Activated naive CD4-positive, alpha-beta T cell treated with anti-CD3 and anti-CD28 coated beads, Interleukin-2, amount 10 ng/mL, durations not matched to agents 7 days and 5 days (primary cell): ENCODE measurements at regions of chr17 and their contacts with region 1.

Region 1: GRCh38 chr17:77404812-77405581 is 264.2 kb downstream of the SEC14L1 start:
- DNase-seq: peak; percentile 91
- H3K4me3 Mint-ChIP-seq: peak overlapping the region; percentile 85
- H3K27ac Mint-ChIP-seq: peak overlapping the region; percentile 96
- H3K4me1 Mint-ChIP-seq: peaks cover 99% of the 10 kb centered on the region
- H3K27me3 Mint-ChIP-seq: no peaks in the 10 kb centered on the region

Region 2: DNA sequence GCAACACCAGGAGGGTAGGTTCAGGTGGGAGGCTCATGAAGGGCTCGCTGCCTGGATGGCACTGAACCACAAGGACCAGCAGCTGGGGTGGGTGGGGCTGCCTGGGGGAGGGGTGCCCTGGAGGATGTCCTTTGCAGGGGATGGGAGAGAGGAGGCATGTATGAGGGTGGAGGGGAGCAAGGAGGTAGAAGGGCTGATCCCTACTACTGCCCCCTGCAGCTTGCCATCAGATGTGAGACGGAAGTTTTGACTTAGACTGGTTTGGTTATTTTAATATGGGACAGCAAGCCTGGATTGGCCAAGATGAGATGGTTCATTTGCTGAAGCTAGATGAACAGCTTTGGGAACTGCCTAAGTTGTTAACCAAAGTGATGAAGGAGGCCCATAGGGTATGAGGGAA is 148.3 kb before region 1 on chr17:
- CTCF ChIA-PET with region 1: no interaction called
- DNase-seq: no peak
- H3K4me3 Mint-ChIP-seq: no peak overlapping the region
- H3K27ac Mint-ChIP-seq: no peak overlapping the region
- H3K4me1 Mint-ChIP-seq: no peaks in the 10 kb centered on the region
- H3K27me3 Mint-ChIP-seq: peaks cover 54% of the 10 kb centered on the region

Region 3: GRCh38 chr17:77382966-77383612 is 21.9 kb before region 1 on chr17:
- CTCF ChIA-PET with region 1: interaction called, 24 read pairs
- DNase-seq: no peak
- H3K4me3 Mint-ChIP-seq: peak overlapping the region; percentile 70
- H3K27ac Mint-ChIP-seq: peak overlapping the region; percentile 86
- H3K4me1 Mint-ChIP-seq: peaks cover 93% of the 10 kb centered on the region
- H3K27me3 Mint-ChIP-seq: no peaks in the 10 kb centered on the region

Region 4: GRCh38 chr17:77420804-77421629 is 16.0 kb after region 1 on chr17:
- CTCF ChIA-PET with region 1: interaction called, 20 read pairs
- DNase-seq: peak; percentile 65
- H3K4me3 Mint-ChIP-seq: peak overlapping the region; percentile 46
- H3K27ac Mint-ChIP-seq: peak overlapping the region; percentile 89
- H3K4me1 Mint-ChIP-seq: peaks cover 79% of the 10 kb centered on the region
- H3K27me3 Mint-ChIP-seq: no peaks in the 10 kb centered on the region

Region 5: GRCh38 chr17:77444984-77445759 is 40.2 kb after region 1 on chr17:
- CTCF ChIA-PET with region 1: interaction called, 17 read pairs
- DNase-seq: peak; percentile 92
- H3K4me3 Mint-ChIP-seq: peak overlapping the region; percentile 85
- H3K27ac Mint-ChIP-seq: peak overlapping the region; percentile 98
- H3K4me1 Mint-ChIP-seq: peaks cover 100% of the 10 kb centered on the region
- H3K27me3 Mint-ChIP-seq: no peaks in the 10 kb centered on the region

Region 6: DNA sequence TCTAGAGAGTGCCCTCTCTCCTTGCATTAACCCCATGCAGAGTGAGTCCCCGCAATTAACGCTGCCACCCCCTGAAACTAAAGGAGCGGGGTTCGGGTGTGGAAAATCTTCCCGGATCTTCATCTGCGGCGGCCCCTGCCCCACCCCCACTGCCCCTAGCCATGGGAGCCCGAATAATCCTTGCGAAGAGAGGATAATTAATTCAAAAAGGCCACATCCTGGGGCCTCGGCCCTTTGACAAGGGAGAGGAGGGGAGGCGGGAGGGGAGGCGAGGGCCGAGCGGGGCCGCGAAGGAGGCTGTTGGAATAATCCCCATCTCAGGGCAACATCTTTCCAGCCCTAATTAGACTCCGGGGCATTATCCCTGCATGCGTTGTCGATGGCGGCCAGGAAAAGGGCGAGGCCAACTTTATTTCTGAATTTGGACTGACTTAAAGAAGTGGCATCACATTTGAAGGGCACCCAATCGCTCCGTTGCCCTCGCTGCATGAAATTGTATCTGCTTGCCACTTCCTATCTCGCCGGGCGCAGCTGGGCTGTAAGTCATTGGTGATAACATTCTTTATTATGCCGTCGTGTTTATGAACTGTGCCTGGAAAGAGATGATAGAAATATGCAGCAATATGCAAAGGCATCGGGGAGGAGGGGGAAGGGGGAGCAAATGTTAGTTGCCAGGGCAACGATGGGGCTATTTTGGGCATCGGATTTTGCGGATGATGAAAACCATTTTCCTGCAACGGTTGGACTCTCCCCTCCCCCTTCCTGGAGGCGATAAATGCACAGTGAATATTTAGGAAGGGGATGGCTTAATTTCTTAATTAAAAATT is 166.4 kb after region 1 on chr17:
- CTCF ChIA-PET with region 1: no interaction called
- DNase-seq: peak; percentile 38
- H3K4me3 Mint-ChIP-seq: peak overlapping the region; percentile 44
- H3K27ac Mint-ChIP-seq: no peak overlapping the region
- H3K4me1 Mint-ChIP-seq: peaks cover 8% of the 10 kb centered on the region
- H3K27me3 Mint-ChIP-seq: peaks cover 82% of the 10 kb centered on the region